ENCODE measurements at regions of chr7 and their contacts with region 1.

Region 1: DNA sequence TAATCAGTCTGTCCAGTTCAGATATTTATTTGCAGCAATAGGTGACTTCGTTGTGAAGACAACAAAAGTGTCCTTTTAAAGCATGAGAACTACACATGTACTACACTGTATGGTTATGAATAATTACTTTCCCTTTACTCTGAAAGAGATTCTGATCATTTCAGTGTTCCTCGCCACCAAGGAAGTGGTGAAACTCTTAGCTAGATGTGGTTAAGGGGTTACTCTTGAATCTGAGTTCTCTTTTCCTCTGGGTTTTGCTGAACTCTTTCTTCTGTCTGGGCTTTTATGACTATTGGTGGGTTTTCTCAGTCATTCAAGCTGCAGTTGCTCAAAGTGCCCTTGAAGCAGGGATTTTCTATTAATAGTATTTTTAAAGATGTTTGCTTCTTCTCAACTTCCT is 127.9 kb upstream of the SEM1 start:
- DNase-seq: peak; percentile 83
- H3K4me3 Mint-ChIP-seq: peak overlapping the region; percentile 50
- H3K27ac Mint-ChIP-seq: no peak overlapping the region
- H3K4me1 Mint-ChIP-seq: peaks cover 17% of the 10 kb centered on the region
- H3K27me3 Mint-ChIP-seq: peaks cover 50% of the 10 kb centered on the region

Region 2: GRCh38 chr7:96285579-96285978 is 552.0 kb before region 1 on chr7:
- intact Hi-C with region 1: loop called (anchors 2 kb)
- DNase-seq: peak; percentile 87
- H3K4me3 Mint-ChIP-seq: peak overlapping the region; percentile 68
- H3K27ac Mint-ChIP-seq: peak overlapping the region; percentile 93
- H3K4me1 Mint-ChIP-seq: peaks cover 49% of the 10 kb centered on the region
- H3K27me3 Mint-ChIP-seq: no peaks in the 10 kb centered on the region

Region 3: DNA sequence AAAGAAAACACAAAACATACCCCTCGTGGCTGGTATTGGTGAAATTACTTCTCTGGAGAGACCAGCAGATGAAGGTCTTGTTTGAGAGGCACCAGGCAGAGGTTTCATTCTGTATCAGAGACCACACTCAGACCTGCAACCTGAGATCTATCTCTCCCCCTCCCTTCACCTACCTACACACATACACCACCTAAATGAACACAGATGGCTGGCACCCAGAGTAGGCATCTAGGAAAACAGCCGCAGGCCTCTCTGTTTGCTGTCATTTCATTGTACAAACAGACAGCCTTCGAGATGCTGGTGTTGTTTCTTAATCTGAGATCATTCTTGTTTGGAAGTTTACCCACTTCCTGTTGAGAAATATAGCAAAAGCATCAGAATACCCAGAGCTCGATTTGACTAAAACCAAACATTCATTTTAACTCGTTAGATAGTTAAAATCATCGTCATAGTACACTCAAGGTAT is 341.8 kb before region 1 on chr7:
- intact Hi-C with region 1: loop called (anchors 2 kb)
- DNase-seq: peak; percentile 74
- H3K4me3 Mint-ChIP-seq: peak overlapping the region; percentile 57
- H3K27ac Mint-ChIP-seq: peak overlapping the region; percentile 89
- H3K4me1 Mint-ChIP-seq: peaks cover 18% of the 10 kb centered on the region
- H3K27me3 Mint-ChIP-seq: peaks cover 9% of the 10 kb centered on the region

Region 4: GRCh38 chr7:96709381-96710228 is 128.0 kb before region 1 on chr7 and contains the start of gene SEM1:
- intact Hi-C with region 1: loop called (anchors 5 kb)
- DNase-seq: peak; percentile 88
- H3K4me3 Mint-ChIP-seq: peak within 1 kb of the TSS; percentile 95
- H3K27ac Mint-ChIP-seq: peak within 1 kb of the TSS; percentile 97
- H3K4me1 Mint-ChIP-seq: peaks cover 20% of the 10 kb centered on the region
- H3K27me3 Mint-ChIP-seq: peaks cover 1% of the 10 kb centered on the region
- total RNA-seq, gene SEM1: 41.5 and 43.8 TPM in 2 replicates

Region 5: GRCh38 chr7:96786261-96786997 is 51.2 kb before region 1 on chr7:
- intact Hi-C with region 1: no loop called
- DNase-seq: no peak
- H3K4me3 Mint-ChIP-seq: no peak overlapping the region
- H3K27ac Mint-ChIP-seq: no peak overlapping the region
- H3K4me1 Mint-ChIP-seq: no peaks in the 10 kb centered on the region
- H3K27me3 Mint-ChIP-seq: peaks cover 5% of the 10 kb centered on the region

Region 6: GRCh38 chr7:96823274-96823673 is 14.3 kb before region 1 on chr7:
- intact Hi-C with region 1: loop called (anchors 2 kb)
- DNase-seq: no peak
- H3K4me3 Mint-ChIP-seq: no peak overlapping the region
- H3K27ac Mint-ChIP-seq: no peak overlapping the region
- H3K4me1 Mint-ChIP-seq: no peaks in the 10 kb centered on the region
- H3K27me3 Mint-ChIP-seq: peaks cover 20% of the 10 kb centered on the region

Region 7: DNA sequence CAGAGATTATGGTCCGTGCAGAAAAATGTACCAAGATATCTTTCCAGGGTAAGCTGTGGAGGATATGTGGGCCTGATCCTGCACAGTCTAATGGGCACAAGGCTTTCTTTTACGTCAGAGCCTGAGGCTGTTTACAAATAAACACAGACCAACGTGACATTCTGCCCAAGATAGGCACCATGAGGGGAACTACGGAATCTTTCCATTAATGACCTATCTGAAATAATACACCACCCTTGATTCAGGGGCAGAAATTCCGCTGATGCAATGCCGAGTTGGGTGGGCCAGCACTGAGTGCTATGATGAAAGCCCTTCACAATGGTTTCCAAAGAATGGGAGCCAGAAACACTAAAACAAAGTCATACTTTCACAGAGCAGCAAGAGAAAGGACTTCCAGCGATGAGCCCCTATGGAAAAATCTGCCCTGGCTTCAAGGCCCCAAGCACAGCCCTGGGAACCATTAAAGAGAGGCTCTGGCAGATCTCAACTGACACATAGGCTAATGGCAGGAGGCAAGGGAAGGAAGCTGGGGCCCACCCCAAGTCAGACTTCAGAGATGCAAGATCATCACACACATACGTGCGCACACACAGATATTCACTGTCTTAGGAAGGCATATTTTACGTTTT is 95.5 kb after region 1 on chr7:
- intact Hi-C with region 1: no loop called
- DNase-seq: no peak
- H3K4me3 Mint-ChIP-seq: no peak overlapping the region
- H3K27ac Mint-ChIP-seq: no peak overlapping the region
- H3K4me1 Mint-ChIP-seq: no peaks in the 10 kb centered on the region
- H3K27me3 Mint-ChIP-seq: peaks cover 2% of the 10 kb centered on the region

Region 8: GRCh38 chr7:96962221-96962885 is 124.8 kb after region 1 on chr7:
- intact Hi-C with region 1: no loop called
- DNase-seq: no peak
- H3K4me3 Mint-ChIP-seq: no peak overlapping the region
- H3K27ac Mint-ChIP-seq: no peak overlapping the region
- H3K4me1 Mint-ChIP-seq: no peaks in the 10 kb centered on the region
- H3K27me3 Mint-ChIP-seq: peaks cover 13% of the 10 kb centered on the region